ENCODE measurements at regions of chr14 and their contacts with region 1.

Region 1: DNA sequence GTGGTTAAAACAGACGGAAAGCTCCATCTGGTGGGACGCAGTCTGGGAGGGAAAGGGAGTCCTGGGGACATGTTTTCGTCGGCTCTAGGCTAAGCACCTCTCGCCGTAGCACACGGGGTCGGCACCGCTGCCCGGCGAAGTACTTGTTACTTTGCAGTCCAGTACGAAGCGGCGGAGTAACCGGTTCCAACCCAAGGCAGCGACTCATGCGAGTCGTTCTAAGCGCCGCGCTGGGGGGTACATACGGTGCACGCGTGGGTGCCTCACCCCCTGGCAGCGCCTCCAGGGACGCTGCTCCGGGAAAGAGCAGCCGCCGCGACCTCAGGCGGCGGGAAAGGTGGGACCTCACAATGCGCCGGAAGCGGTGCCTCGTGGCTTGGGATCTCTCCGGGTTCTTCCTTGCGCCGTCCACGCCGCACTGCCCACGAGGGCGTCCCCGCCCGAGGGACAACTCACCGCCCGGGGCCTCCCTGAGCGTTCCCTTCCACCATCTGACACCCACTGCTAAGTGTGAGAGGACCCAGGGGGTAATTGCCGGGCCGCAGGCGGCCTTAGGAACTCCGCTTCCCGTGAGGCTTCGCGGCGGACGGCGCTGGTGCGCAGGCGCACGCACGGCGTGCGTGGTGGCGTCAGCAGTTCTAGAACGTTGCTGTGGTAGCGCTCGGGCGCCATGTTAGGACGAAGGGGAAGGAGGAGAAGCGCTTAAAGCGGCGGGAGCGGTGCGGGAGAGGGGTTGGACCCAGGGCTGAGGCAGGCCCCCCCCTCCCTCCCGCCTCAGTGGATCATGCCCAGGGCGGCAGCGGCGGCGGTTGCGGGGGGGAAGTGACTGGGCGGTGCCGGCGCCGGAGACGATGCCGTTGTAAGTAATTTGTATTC is at the start of gene PAPOLA:
- DNase-seq: peak; percentile 96
- ATAC-seq: peak; percentile 93
- H3K4me3 Mint-ChIP-seq: peak within 1 kb of the TSS; percentile 95
- H3K27ac Mint-ChIP-seq: peak within 1 kb of the TSS; percentile 99
- H3K4me1 Mint-ChIP-seq: peaks cover 42% of the 10 kb centered on the region
- H3K27me3 Mint-ChIP-seq: peaks cover 3% of the 10 kb centered on the region
- CTCF ChIP-seq: no peak
- total RNA-seq, gene PAPOLA: 176 to 178 TPM

Region 2: DNA sequence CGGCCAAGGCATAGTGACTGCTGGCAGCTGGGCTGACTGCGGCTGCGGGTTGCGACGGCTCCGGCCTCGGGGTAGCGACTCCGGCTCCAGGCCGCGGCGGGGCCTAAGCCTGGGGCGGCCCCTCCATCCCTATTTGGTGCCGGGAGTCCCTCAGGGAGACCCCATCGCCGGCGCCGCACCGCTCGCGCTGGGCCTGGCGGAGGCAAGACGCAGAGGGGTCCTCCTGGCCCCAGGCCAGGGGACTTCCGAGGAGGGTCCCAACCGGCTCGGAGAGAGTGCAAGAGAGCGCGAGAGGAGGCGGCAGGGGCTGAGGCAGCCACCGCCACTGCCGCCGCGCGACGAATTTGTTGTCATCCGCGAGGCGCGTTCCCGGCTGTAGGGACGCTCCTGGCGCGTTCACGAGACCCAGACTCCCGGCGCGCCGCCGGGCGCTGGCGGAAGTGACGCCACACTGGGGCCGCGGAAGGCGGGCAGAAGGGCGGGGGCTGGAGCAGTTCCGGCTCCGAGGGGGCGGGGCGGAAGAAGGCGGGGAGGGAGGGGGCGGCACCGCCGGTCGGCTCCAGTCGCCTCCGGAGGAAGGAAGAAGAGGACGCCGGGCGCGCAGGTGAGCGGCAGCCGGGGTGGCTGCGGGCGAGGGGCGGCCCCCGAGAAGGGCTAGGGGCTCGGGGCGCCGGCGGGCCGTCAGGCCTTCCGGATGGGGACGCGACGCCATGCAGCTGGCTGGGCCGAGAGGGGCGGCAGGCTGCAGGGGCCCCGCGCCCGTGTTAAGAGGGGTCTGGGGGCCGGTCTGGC is 138.8 kb before region 1 on chr14 and contains the starts of genes ATG2B and GSKIP:
- CTCF ChIA-PET with region 1: no interaction called
- POLR2A ChIA-PET with region 1: interaction called, 3 read pairs
- intact Hi-C with region 1: loop called (anchors 5 kb)
- DNase-seq: peak; percentile 96
- ATAC-seq: peak; percentile 81
- H3K4me3 Mint-ChIP-seq: peak within 1 kb of the TSS; percentile 88
- H3K27ac Mint-ChIP-seq: peak within 1 kb of the TSS; percentile 91
- H3K4me1 Mint-ChIP-seq: peaks cover 49% of the 10 kb centered on the region
- H3K27me3 Mint-ChIP-seq: no peaks in the 10 kb centered on the region
- CTCF ChIP-seq: no peak
- total RNA-seq, gene ATG2B: 12.9 to 13.3 TPM
- total RNA-seq, gene GSKIP: 21.8 to 21.9 TPM